Adrenal gland (tissue), 19 donors: ENCODE measurements at regions of chr7 and their contacts with region 1.

Region 1: GRCh38 chr7:98740643-98741042 is 123.6 kb downstream of the NPTX2 start:
- DNase-seq: no peak
- H3K4me3 ChIP-seq: no peak overlapping the region
- H3K27ac ChIP-seq: no peak overlapping the region
- H3K4me1 ChIP-seq: no peaks in the 10 kb centered on the region
- H3K27me3 ChIP-seq: peaks cover 3% of the 10 kb centered on the region
- CTCF ChIP-seq: no peak
- POLR2A ChIP-seq: no peak

Region 2: DNA sequence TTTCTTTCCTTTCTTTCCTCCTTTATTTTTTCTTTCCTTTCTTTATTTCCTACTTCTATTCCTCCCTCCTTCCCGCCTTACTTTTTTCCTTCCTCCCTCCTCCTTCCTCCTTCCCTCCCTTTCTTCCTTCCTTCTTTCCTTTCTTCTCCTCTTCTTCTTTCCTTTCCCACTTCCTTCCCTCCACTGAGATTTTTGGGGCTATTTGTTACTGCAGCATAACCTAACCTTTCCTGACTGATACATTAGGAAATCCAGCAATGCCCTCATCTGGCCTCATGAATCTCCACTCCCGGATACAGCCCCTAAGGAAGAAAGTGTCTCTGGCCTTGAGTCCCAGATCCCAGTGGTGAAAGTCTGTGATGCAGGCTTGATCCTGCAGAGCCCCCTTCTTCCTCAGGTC is 301.2 kb before region 1 on chr7:
- intact Hi-C with region 1: loop called in 1 of 2 experiments (anchors 5 kb)
- DNase-seq: no peak
- H3K4me3 ChIP-seq: no peak overlapping the region
- H3K27ac ChIP-seq: no peak overlapping the region
- H3K4me1 ChIP-seq: no peaks in the 10 kb centered on the region
- H3K27me3 ChIP-seq: no peaks in the 10 kb centered on the region
- CTCF ChIP-seq: no peak
- POLR2A ChIP-seq: no peak